ENCODE measurements at regions of chr11 and their contacts with region 1.

Region 1: GRCh38 chr11:133977067-133977677 is 20.4 kb upstream of the IGSF9B start:
- DNase-seq: no peak
- H3K4me3 Mint-ChIP-seq: no peak overlapping the region
- H3K27ac Mint-ChIP-seq: no peak overlapping the region
- H3K4me1 Mint-ChIP-seq: peaks cover 10% of the 10 kb centered on the region
- H3K27me3 Mint-ChIP-seq: peaks cover 18% of the 10 kb centered on the region

Region 2: DNA sequence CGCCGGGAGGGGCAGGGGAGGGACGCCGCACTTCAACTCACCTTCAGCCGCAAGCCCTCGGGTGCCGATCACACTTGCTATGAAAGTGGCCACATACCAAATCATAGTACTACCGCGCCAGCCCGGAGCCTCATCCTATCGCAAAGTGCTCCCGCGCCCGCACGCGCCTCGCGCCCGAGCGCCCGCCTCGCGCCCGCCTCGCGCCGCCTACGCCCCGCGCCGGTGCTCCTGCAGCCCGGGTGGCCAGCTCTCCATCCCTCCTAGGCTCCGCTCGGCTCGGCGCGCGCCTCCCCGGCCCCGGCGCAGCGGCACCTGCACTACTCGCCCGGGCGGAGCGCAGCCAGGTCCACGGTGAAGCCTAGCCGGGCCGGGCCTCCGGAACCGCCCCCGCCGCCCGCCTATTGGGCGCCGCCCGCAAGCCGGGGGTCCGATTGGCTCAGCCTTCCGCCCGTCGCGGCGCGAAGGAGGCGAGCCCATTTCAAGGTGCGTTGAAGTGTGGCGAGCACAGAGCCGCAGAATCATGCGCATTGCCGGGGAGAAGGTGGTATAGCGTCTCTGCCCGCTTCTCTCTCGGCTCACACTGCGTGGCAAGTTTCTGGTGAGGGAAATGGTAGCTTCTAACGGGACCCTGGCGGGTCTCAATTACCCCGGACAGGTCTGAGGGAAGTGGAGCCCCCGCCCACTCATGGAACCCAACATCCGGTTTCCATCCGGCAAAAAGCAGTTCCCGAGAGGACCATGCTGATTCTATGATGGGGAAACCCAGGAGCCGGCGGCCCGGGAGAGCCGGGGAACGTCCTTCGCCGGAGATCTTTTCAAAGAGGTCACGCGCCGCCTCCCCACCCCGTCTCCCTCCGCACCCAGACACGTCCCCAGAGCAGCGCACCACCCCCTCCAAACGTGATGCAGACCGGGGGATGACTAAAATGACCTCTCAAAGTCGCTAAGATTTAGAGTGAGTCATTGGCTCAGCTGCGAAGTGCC is 20.2 kb before region 1 on chr11 and contains the start of gene IGSF9B:
- intact Hi-C with region 1: loop called (anchors 2 kb)
- DNase-seq: peak; percentile 90
- H3K4me3 Mint-ChIP-seq: peak within 1 kb of the TSS; percentile 83
- H3K27ac Mint-ChIP-seq: peak within 1 kb of the TSS; percentile 86
- H3K4me1 Mint-ChIP-seq: peaks cover 49% of the 10 kb centered on the region
- H3K27me3 Mint-ChIP-seq: peaks cover 10% of the 10 kb centered on the region
- total RNA-seq, gene IGSF9B: 101 and 110 TPM in 2 replicates